ENCODE measurements at regions of chr2 and their contacts with region 1.

Region 1: DNA sequence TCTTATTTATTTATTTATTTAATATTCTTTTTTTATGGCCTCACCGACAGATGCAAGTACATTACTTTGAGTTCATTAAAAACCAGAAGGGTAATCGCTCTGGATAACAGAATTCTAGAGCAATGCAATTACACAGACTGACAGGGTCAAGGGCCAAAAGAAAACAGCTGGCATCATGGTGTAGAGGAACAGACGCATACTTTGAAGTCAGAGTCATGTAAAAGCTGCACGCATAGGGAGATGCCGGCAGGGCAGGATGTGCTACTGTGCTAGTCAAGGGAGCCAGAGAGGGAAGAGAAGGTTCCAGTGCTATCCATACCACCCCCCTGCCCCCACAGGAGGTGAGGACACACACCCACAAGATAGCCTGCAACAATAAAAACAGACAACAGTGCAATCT is 115.2 kb upstream of the TFCP2L1 start:
- DNase-seq: no peak
- H3K4me3 ChIP-seq: no peak overlapping the region
- H3K27ac ChIP-seq: no peak overlapping the region
- H3K4me1 ChIP-seq: no peaks in the 10 kb centered on the region
- H3K27me3 ChIP-seq: no peaks in the 10 kb centered on the region
- CTCF ChIP-seq: no peak
- POLR2A ChIP-seq: no peak

Region 2: DNA sequence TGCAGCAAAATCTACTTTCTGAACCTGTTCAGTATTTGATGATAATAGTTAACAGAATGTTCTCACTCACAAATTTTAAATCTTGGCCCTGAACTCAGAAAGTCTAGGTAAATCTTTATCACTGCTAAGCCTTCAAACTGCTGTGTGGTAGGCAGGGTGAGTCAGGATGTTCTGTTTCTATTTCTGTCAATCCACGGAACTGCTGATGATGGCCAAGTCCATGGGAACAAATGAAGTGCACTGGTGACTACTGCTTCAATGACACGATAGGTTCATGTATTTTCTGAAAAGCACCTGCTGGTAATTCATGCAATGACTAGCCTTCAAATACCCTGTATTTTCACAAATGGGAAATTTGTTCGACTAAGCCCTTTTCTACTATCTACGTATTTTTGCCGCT is 322.3 kb after region 1 on chr2:
- intact Hi-C with region 1: loop called (anchors 5 kb)
- DNase-seq: no peak
- H3K4me3 ChIP-seq: no peak overlapping the region
- H3K27ac ChIP-seq: no peak overlapping the region
- H3K4me1 ChIP-seq: no peaks in the 10 kb centered on the region
- H3K27me3 ChIP-seq: no peaks in the 10 kb centered on the region
- CTCF ChIP-seq: no peak
- POLR2A ChIP-seq: no peak

Measured in prostate gland (tissue), 2 donors.